Cardiac septum (tissue), 1 donor: ENCODE measurements at regions of chr3 and their contacts with region 1.

Region 1: GRCh38 chr3:181555681-181556080 is 156.0 kb upstream of the SOX2 start:
- DNase-seq: no peak

Region 2: DNA sequence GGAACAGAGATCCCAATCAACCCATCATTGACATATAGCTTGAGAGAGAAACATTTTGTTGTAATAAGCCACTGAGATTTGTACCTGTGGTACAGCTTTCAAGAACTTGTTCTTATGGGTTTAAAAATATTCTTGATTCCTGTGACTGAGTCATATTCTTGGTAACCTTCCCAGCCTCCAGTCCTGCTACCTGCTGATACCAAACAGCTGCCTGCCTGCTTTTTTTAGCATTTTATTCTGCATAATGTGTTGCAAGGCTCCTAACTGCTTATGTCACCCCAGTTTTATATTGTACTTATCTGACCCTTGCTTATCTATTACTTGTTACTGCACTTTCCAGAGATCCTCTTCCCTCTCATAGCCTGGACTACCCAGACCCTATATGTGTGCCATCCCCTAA is 193.3 kb before region 1 on chr3:
- intact Hi-C with region 1: loop called (anchors 5 kb)
- DNase-seq: no peak

Region 3: DNA sequence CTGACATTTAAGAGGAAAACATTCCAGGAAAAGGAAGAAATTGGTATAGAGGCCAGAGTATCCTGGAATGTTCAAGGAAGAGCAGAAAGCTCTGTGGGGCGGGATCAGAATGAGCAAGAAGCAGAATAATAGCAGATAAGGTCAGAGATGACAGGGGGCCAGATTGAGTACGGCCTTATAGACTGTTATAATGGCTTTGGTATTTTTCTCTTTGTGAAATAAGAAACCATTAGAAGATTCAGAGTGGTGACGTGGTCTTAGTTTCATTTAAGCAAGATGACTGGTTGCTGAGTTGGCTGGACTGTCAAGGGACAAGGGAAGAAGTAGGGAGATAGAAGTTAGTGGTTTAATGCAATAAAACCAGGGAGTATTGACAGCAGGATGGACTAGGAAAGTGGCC is 62.3 kb before region 1 on chr3:
- intact Hi-C with region 1: no loop called
- DNase-seq: no peak